ENCODE measurements at regions of chr17 and their contacts with region 1.

Region 1: GRCh38 chr17:45277216-45277849 is 15.4 kb upstream of the SPATA32 start:
- DNase-seq: peak; percentile 90
- H3K4me3 Mint-ChIP-seq: no peak overlapping the region
- H3K27ac Mint-ChIP-seq: no peak overlapping the region
- H3K4me1 Mint-ChIP-seq: peaks cover 9% of the 10 kb centered on the region
- H3K27me3 Mint-ChIP-seq: no peaks in the 10 kb centered on the region
- CTCF ChIP-seq: peak; percentile 73

Region 2: GRCh38 chr17:45123930-45124796 is 153.2 kb before region 1 on chr17:
- CTCF ChIA-PET with region 1: no interaction called
- POLR2A ChIA-PET with region 1: no interaction called
- intact Hi-C with region 1: no loop called
- DNase-seq: peak; percentile 89
- H3K4me3 Mint-ChIP-seq: peak overlapping the region; percentile 35
- H3K27ac Mint-ChIP-seq: peak overlapping the region; percentile 91
- H3K4me1 Mint-ChIP-seq: peaks cover 42% of the 10 kb centered on the region
- H3K27me3 Mint-ChIP-seq: no peaks in the 10 kb centered on the region
- CTCF ChIP-seq: no peak

Region 3: DNA sequence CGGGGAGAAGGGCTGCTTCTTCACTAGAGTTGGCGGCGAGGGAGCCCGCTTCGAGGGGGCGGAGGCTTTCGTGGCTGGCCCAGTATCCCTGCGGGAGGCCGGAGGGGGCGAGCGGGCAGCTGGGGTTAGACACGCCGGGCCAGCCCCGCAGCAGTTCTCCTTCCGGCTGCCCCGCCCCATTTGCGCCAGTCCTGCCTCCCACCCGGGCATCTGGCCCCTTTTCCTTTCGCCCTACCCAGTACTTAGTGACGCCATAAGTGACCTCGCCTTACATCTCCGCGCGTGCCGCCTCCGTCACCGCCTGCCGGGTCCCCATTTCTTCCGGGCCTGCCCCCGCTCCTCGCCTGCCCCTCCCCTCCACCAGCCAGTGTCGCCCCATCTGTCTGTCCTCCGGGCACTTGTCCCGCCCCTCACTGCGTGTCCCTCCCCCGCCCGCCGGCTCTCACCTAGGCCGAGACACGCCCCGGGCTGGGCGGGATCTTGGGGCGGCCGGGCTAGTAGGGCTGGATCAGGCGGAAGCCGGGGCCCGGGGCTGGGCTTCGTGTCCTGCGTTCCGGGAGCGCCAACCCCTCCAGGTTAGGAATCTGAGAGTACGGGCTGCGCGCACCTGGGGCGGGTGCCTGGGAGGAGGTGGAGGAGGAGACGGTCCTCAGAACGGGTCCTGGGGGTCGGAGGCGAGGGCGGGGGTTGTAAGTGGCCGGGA is 29.8 kb before region 1 on chr17:
- CTCF ChIA-PET with region 1: interaction called, 13 read pairs
- POLR2A ChIA-PET with region 1: no interaction called
- intact Hi-C with region 1: no loop called
- DNase-seq: peak; percentile 97
- H3K4me3 Mint-ChIP-seq: peak overlapping the region; percentile 96
- H3K27ac Mint-ChIP-seq: peak overlapping the region; percentile 80
- H3K4me1 Mint-ChIP-seq: peaks cover 20% of the 10 kb centered on the region
- H3K27me3 Mint-ChIP-seq: no peaks in the 10 kb centered on the region
- CTCF ChIP-seq: no peak

Region 4: DNA sequence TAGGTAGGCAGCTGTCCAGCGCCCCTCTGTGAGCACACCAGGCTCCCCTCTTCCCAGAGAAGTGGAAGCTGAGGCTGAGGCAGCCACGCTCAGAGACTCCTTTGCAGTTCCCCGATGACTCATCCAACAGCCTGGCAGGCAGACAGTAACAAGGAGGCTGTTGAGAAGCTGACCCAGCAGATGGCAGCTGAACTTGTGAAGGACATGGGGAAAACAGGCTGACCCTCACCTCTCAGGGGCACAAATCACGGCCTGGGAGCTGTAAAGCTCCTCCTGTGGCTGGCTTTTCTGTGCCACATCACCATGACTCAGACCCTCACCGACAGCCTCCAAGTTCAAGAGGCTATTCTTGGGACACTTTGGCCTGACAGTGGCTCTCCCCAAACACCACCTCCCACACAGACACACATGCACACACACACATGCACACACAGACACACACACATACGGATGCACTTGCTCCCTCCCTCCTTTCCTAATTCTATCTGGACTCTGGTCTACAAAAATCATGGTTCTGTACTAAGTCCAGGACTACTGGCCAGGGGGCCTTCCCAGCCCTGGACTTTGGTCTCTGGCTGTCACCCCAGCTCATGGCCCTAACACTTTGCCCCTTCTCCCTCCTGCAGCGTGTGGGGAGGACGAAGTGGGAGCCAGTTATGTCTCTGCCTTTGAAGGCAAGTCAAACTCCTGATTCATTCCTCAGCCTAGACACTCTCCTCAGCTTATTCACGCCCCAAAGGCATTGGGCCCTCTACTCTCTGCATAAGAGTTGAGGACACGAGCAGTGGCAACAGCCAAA is 16.3 kb after region 1 on chr17:
- CTCF ChIA-PET with region 1: interaction called, 40 read pairs
- POLR2A ChIA-PET with region 1: interaction called, 32 read pairs
- intact Hi-C with region 1: no loop called
- DNase-seq: peak; percentile 95
- H3K4me3 Mint-ChIP-seq: peak overlapping the region; percentile 23
- H3K27ac Mint-ChIP-seq: peak overlapping the region; percentile 68
- H3K4me1 Mint-ChIP-seq: peaks cover 50% of the 10 kb centered on the region
- H3K27me3 Mint-ChIP-seq: no peaks in the 10 kb centered on the region
- CTCF ChIP-seq: no peak

Region 5: GRCh38 chr17:45317112-45317928 is 40.0 kb after region 1 on chr17:
- CTCF ChIA-PET with region 1: interaction called, 21 read pairs
- POLR2A ChIA-PET with region 1: interaction called, 10 read pairs
- intact Hi-C with region 1: loop called (anchors 1 kb)
- DNase-seq: peak; percentile 100
- H3K4me3 Mint-ChIP-seq: peak overlapping the region; percentile 86
- H3K27ac Mint-ChIP-seq: peak overlapping the region; percentile 98
- H3K4me1 Mint-ChIP-seq: peaks cover 71% of the 10 kb centered on the region
- H3K27me3 Mint-ChIP-seq: no peaks in the 10 kb centered on the region
- CTCF ChIP-seq: no peak

Region 6: DNA sequence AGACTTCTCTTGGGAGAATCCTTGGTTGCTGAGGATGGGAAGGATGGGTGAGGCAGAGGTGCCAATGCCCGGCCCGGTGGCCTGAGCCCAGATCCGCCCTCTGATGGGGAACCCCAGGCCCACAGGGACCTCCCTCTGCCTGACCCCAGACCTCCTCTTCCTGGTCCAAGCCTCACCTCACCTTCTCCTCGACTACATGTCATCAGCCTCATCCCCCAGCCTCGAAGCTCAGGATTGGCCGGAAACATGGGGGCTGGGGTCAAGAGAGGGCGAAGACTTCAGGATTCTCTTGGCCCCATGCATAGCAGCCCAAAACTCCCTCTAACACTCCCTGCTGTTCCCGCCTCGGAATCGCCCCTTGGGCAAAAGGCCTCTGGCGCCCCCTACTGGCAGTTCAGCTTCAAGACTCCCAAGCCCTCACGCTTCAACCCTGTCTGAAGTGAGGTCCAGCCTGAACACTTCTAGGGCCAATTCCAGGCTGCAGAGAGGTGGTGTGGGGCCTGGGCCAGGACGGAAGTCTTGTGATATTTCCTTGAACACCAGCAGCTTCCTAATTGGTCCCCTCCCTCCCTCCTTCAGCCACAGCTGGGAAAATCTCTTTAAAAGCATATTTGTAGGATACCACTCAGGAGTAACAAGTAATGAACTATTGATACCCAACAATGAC is 108.1 kb after region 1 on chr17:
- CTCF ChIA-PET with region 1: interaction called, 229 read pairs
- POLR2A ChIA-PET with region 1: interaction called, 32 read pairs
- intact Hi-C with region 1: loop called (anchors 1 kb)
- DNase-seq: peak; percentile 87
- H3K4me3 Mint-ChIP-seq: no peak overlapping the region
- H3K27ac Mint-ChIP-seq: no peak overlapping the region
- H3K4me1 Mint-ChIP-seq: peaks cover 5% of the 10 kb centered on the region
- H3K27me3 Mint-ChIP-seq: no peaks in the 10 kb centered on the region
- CTCF ChIP-seq: peak; percentile 94

Region 7: DNA sequence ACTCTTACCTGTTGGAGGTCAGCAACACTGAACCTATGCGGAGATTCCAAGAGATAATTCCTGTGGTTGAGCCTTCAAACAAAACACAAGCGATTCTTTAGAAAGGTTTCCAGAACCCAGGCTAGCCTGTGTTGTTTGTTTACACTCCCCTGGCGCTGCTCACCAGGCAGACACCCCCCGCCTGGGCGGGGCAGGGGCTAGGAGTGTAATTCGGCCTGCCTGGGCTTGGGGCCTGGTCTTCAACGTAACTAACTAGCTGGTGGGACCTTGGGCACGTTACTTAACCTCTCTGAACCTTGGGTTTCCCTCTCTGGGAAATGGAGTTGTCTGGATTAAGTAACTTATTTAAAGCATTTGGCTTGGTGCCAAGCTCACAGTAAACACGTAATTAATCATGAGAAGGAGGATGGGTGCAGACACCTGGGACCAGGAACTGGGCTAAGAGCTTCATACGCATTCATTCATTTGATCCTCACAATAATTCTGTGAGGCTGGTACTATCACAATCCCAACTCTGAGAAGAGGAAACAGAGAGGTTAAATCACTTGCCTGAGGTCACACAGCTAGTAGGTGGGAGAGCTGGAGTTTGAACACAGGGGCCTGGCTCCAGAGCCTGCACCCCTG is 162.9 kb after region 1 on chr17:
- CTCF ChIA-PET with region 1: no interaction called
- POLR2A ChIA-PET with region 1: no interaction called
- intact Hi-C with region 1: no loop called
- DNase-seq: peak; percentile 77
- H3K4me3 Mint-ChIP-seq: peak overlapping the region; percentile 38
- H3K27ac Mint-ChIP-seq: peak overlapping the region; percentile 66
- H3K4me1 Mint-ChIP-seq: peaks cover 20% of the 10 kb centered on the region
- H3K27me3 Mint-ChIP-seq: no peaks in the 10 kb centered on the region
- CTCF ChIP-seq: no peak